Activated CD4-positive, alpha-beta memory T cell treated with anti-CD3 and anti-CD28 coated beads for 36 hours (primary cell): ENCODE measurements at regions of chr13 and their contacts with region 1.

Region 1: GRCh38 chr13:75326173-75327134 is 155.5 kb downstream of the TBC1D4 start:
- DNase-seq: peak; percentile 78
- H3K4me3 Mint-ChIP-seq: peak overlapping the region; percentile 89
- H3K27ac Mint-ChIP-seq: peak overlapping the region; percentile 95
- H3K4me1 Mint-ChIP-seq: peaks cover 35% of the 10 kb centered on the region
- H3K27me3 Mint-ChIP-seq: no peaks in the 10 kb centered on the region

Region 2: DNA sequence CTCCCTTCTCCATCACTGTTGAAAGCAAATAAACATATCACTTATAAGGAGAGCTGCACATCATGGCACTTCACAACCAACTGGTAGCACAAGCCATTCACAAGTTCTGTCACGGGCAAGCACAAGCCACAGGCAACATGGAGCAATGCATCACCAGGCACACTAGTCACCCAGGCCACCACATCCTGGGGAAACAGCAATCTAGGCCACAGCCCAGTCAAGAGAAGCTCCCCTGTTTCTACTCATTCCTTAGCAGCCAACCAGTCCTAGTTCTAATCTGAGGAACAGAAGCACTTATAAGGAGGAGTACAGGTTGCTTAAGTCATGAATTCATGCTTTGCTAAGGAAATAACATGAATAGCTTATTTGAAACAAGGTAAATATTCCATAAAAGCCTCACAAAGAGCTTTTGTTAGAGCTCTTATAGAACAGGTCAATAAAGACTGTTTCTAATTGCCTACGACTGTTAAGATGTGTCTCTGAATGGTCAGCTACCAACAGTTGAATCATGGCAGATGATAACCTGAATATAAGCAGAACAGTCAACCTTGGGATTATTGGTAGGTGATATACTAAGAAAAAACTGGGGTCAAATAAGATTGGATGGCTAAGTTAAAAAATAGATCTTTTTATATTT is 13.5 kb before region 1 on chr13:
- CTCF ChIA-PET with region 1: interaction called, 9 read pairs
- POLR2A ChIA-PET with region 1: interaction called, 8 read pairs
- intact Hi-C with region 1: loop called (anchors 2 kb)
- DNase-seq: peak; percentile 80
- H3K4me3 Mint-ChIP-seq: no peak overlapping the region
- H3K27ac Mint-ChIP-seq: peak overlapping the region; percentile 2
- H3K4me1 Mint-ChIP-seq: peaks cover 57% of the 10 kb centered on the region
- H3K27me3 Mint-ChIP-seq: no peaks in the 10 kb centered on the region

Region 3: GRCh38 chr13:75357576-75358289 is 31.3 kb after region 1 on chr13:
- CTCF ChIA-PET with region 1: interaction called, 18 read pairs
- POLR2A ChIA-PET with region 1: interaction called, 3 read pairs
- intact Hi-C with region 1: loop called (anchors 1 kb)
- DNase-seq: peak; percentile 65
- H3K4me3 Mint-ChIP-seq: no peak overlapping the region
- H3K27ac Mint-ChIP-seq: no peak overlapping the region
- H3K4me1 Mint-ChIP-seq: peaks cover 2% of the 10 kb centered on the region
- H3K27me3 Mint-ChIP-seq: no peaks in the 10 kb centered on the region

Region 4: GRCh38 chr13:75416327-75417005 is 90.0 kb after region 1 on chr13:
- CTCF ChIA-PET with region 1: no interaction called
- POLR2A ChIA-PET with region 1: no interaction called
- intact Hi-C with region 1: no loop called
- DNase-seq: no peak
- H3K4me3 Mint-ChIP-seq: no peak overlapping the region
- H3K27ac Mint-ChIP-seq: no peak overlapping the region
- H3K4me1 Mint-ChIP-seq: no peaks in the 10 kb centered on the region
- H3K27me3 Mint-ChIP-seq: peaks cover 5% of the 10 kb centered on the region

Region 5: DNA sequence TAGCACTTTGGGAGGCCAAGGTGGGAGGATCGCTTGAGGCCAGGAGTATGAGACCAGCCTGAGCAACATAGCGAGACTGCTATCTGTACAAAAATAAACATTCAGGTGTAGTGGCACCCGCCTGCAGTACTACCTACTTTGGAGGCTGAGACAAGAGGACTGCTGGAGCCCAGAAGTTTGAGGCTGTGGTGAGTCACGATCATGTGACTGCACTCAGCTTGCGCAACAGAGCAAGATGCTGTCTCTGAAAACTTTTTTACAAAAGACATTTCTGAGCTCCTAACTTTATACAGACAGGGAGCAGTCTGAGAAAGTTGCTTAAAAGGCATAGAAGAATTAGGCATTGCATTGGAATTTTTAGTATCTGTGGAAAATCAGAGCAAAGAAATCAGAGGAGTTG is 165.9 kb after region 1 on chr13:
- CTCF ChIA-PET with region 1: no interaction called
- POLR2A ChIA-PET with region 1: no interaction called
- intact Hi-C with region 1: no loop called
- DNase-seq: no peak
- H3K4me3 Mint-ChIP-seq: no peak overlapping the region
- H3K27ac Mint-ChIP-seq: no peak overlapping the region
- H3K4me1 Mint-ChIP-seq: peaks cover 2% of the 10 kb centered on the region
- H3K27me3 Mint-ChIP-seq: peaks cover 7% of the 10 kb centered on the region